ENCODE measurements at regions of chr2 and their contacts with region 1.

Region 1: DNA sequence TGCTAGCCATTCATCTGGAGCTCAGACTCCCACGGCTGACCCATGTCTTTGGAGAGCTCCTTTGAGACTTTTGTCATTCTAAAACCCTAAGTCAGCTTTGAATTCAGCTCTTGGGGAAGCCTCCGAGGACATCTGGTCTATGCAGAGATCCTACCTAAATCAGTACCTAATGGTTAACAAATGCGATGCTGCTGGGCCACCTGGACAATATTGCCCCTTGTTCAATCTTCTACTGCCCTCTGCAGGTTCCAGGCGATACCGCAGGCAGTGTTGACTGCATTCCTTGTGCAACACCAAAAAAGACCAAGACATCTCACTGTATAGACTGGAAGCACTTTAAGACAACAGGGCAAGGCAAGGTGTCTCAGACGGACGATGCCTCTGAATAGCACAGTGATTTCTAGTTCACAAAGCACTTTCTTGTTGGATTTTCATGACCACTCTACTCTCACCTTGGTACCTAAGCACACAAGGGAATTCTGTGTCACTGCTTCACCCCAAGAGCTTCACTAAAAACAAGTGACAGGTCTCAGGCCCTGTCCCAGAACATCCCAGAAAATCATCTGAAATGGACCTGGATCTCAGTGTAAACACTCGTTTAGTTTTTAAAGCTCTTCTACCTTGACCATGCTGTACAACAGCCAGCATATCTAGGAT is 80.9 kb downstream of the XDH start:
- DNase-seq: peak; percentile 89
- H3K4me3 Mint-ChIP-seq: no peak overlapping the region
- H3K27ac Mint-ChIP-seq: no peak overlapping the region
- H3K4me1 Mint-ChIP-seq: no peaks in the 10 kb centered on the region
- H3K27me3 Mint-ChIP-seq: no peaks in the 10 kb centered on the region

Region 2: GRCh38 chr2:30862054-30862651 is 471.5 kb before region 1 on chr2:
- CTCF ChIA-PET with region 1: interaction called, 6 read pairs
- intact Hi-C with region 1: loop called (anchors 1 kb)
- DNase-seq: peak; percentile 71
- H3K4me3 Mint-ChIP-seq: no peak overlapping the region
- H3K27ac Mint-ChIP-seq: no peak overlapping the region
- H3K4me1 Mint-ChIP-seq: no peaks in the 10 kb centered on the region
- H3K27me3 Mint-ChIP-seq: peaks cover 7% of the 10 kb centered on the region

Region 3: GRCh38 chr2:30915486-30915885 is 418.2 kb before region 1 on chr2:
- CTCF ChIA-PET with region 1: no interaction called
- intact Hi-C with region 1: no loop called
- DNase-seq: peak; percentile 10
- H3K4me3 Mint-ChIP-seq: no peak overlapping the region
- H3K27ac Mint-ChIP-seq: no peak overlapping the region
- H3K4me1 Mint-ChIP-seq: no peaks in the 10 kb centered on the region
- H3K27me3 Mint-ChIP-seq: no peaks in the 10 kb centered on the region

Region 4: GRCh38 chr2:31138037-31138962 is 195.4 kb before region 1 on chr2 and contains the start of gene GALNT14:
- CTCF ChIA-PET with region 1: interaction called, 5 read pairs
- intact Hi-C with region 1: loop called (anchors 1 kb)
- DNase-seq: peak; percentile 68
- H3K4me3 Mint-ChIP-seq: peak within 1 kb of the TSS; percentile 68
- H3K27ac Mint-ChIP-seq: no peak within 1 kb of the TSS
- H3K4me1 Mint-ChIP-seq: peaks cover 6% of the 10 kb centered on the region
- H3K27me3 Mint-ChIP-seq: peaks cover 51% of the 10 kb centered on the region
- total RNA-seq, gene GALNT14: 1.1 to 1.5 TPM

Region 5: DNA sequence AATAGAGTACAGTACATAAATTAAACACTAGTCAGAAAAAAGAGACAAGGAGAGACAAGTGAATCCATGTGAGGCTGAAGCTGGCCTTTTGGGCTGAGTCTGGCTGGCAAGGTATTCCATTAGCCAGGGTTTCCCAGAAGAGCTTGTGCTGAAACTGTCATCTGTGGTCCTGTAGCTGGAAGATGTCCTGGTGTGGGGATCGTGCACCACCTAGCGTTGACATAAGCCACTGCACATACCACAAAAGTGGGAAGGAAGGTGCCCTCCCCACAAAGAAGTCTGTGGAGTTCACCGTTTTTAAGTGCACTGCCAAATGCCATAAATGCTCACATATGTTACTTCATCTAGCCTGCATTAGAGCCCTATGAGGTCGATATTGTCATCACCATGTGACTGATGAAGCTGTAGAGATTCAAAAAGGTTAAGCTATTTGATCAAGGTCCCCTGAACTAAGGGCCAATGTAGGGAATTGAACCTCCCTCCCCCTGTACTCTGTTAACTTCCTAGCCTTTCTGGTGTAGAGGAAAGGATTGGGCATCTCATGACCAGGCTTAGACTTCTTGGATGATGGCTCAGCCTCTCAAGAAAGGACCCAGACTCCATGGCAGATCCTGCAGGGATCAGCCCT is 163.5 kb before region 1 on chr2:
- CTCF ChIA-PET with region 1: interaction called, 21 read pairs
- intact Hi-C with region 1: loop called (anchors 1 kb)
- DNase-seq: peak; percentile 68
- H3K4me3 Mint-ChIP-seq: no peak overlapping the region
- H3K27ac Mint-ChIP-seq: no peak overlapping the region
- H3K4me1 Mint-ChIP-seq: no peaks in the 10 kb centered on the region
- H3K27me3 Mint-ChIP-seq: peaks cover 3% of the 10 kb centered on the region

Region 6: DNA sequence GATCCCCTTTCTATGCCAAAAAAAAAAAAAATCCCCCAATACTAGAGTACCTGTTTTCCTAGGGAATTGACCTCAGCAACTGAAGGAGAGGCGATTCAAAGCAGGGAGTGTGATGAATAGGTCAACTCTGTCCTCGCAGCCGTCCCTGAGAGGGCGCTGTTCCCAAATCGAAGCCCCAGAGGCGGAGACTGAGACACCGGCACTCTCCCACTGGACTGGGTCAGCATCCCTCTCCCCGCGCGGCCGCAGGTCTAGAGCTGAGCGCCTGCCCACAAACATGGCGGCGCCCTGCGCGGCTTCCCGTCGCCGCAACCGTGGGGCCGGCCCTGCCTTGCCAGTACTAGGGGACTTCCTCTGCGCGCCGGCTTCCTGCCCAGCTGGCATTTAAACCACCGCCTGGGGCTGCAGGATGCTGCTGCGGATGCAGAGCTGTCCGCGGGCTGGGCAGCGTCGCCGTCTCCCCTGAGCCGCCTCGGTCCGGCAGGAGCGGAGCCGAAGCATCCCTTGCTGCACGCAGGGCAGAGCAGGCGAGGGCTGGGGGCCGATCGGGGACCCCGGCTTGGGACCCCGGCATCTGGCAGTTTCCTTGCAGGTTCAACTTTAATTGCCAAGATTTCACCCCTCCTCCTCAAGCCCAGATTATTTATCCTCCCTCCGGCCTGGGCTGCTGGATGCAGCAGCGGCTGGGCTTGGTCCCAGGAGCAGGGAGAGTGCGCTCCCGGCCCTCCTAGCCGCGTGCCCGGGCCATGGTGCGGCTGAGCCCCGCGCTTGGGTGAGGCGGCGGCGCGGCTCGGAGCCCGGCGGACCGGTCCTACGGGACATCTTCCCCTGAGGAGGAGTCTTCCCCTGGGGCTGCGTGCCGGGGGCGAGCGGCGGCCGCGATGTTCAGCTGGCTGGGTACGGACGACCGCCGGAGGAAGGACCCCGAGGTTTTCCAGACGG is 99.6 kb before region 1 on chr2 and contains the start of gene EHD3:
- CTCF ChIA-PET with region 1: interaction called, 5 read pairs
- intact Hi-C with region 1: loop called (anchors 2 kb)
- DNase-seq: peak; percentile 89
- H3K4me3 Mint-ChIP-seq: peak within 1 kb of the TSS; percentile 64
- H3K27ac Mint-ChIP-seq: no peak within 1 kb of the TSS
- H3K4me1 Mint-ChIP-seq: peaks cover 14% of the 10 kb centered on the region
- H3K27me3 Mint-ChIP-seq: no peaks in the 10 kb centered on the region
- total RNA-seq, gene EHD3: 0.67 to 0.74 TPM

Region 7: DNA sequence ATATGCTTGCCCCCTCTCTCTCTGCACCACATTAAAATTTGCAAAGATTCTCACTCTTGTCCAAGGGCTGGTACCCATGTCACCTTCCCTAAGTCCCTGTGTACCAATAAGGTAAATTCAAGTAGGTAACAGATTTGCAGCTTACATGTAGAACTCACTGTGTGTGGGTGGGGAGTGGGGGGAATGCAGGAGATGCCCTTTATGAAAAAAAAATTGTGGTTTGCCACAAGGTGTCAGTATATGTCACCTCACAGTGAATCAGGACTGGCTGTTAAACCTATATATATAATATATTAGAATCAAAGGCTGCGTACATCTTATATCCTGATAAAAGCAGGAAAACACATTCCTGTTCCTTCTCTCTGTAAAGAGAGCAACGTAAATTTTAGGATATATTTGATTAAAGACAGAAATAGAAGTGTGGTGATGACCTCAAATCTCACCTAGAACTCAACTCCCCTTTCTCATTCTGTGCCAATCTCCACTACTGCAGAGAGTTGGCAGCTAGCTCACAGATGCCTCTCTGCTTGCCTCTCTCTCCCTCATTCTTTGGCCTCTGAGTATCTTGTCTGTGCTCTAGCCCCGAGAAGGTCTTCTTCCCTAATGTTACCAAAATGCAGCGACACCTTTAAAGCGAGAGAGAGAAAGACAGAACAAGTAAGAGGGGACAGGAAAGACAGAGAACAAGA is 80.4 kb after region 1 on chr2:
- CTCF ChIA-PET with region 1: no interaction called
- intact Hi-C with region 1: no loop called
- DNase-seq: no peak
- H3K4me3 Mint-ChIP-seq: no peak overlapping the region
- H3K27ac Mint-ChIP-seq: no peak overlapping the region
- H3K4me1 Mint-ChIP-seq: peaks cover 5% of the 10 kb centered on the region
- H3K27me3 Mint-ChIP-seq: peaks cover 2% of the 10 kb centered on the region

Region 8: DNA sequence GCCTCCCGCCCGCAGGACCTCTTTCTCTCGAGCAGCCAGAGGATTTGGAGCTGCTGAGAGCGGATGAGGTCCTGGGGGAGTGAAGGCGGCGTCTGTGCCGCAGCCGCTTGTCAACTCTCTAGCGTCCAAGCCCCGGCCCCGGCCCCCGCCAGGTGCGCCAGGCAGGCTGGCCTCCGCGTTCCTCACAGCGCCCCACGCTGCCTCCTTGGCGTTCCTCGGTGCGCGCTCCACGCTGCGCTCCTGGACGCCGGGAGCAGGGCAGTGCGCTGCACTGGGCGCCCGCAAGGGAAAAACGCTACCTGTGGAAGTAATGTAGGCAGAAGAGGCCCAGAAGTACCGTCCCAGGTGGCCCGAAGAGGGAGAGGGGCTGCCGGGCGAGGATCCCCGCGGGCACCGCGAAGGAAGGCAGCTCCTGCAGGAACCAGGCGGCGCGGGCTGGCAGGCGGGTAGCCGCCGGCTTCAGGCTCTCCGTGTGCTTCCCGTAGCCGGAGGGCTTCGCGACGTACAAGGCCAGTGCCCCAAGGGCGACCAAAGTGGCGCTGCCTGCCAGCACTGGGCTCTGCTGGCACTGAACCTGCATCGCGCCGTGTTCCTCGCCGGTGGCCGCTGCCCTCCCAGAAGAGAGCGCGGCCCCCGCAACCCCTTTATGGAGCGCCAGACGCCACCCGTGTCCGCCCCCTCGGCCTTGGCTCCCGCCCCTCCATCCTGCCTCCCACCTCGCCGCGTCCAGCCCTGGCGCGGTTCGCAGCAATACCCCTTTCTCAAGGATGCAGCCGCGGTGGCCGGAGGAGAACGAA is 246.9 kb after region 1 on chr2 and contains the start of gene SRD5A2:
- CTCF ChIA-PET with region 1: no interaction called
- intact Hi-C with region 1: no loop called
- DNase-seq: no peak
- H3K4me3 Mint-ChIP-seq: no peak within 1 kb of the TSS
- H3K27ac Mint-ChIP-seq: no peak within 1 kb of the TSS
- H3K4me1 Mint-ChIP-seq: peaks cover 2% of the 10 kb centered on the region
- H3K27me3 Mint-ChIP-seq: peaks cover 36% of the 10 kb centered on the region
- total RNA-seq, gene SRD5A2: not detected

Region 9: DNA sequence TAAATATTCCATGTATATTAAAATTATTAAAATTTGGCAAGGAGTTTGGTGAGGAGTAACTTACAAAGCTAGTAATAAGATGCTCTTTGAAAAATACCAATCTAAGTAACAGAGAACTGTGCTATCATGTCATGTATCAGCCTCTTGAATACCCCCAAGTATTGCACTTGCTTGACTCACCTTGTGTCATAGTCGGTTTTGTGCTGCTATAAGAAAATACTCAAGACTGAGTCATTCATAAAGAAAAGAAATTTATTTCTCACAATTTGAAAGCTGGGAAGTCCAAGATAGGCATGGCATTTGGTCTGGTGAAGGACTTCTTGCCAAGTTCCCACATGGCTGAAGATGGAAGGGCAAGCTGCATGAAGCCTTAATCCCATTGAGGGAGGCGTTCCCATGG is 497.9 kb after region 1 on chr2:
- CTCF ChIA-PET with region 1: no interaction called
- intact Hi-C with region 1: loop called (anchors 10 kb)
- DNase-seq: no peak
- H3K4me3 Mint-ChIP-seq: no peak overlapping the region
- H3K27ac Mint-ChIP-seq: no peak overlapping the region
- H3K4me1 Mint-ChIP-seq: no peaks in the 10 kb centered on the region
- H3K27me3 Mint-ChIP-seq: no peaks in the 10 kb centered on the region

Measured in activated naive CD4-positive, alpha-beta T cell treated with anti-CD3 and anti-CD28 coated beads for 36 hours (primary cell).